ENCODE measurements at regions of chr7 and their contacts with region 1.

Region 1: DNA sequence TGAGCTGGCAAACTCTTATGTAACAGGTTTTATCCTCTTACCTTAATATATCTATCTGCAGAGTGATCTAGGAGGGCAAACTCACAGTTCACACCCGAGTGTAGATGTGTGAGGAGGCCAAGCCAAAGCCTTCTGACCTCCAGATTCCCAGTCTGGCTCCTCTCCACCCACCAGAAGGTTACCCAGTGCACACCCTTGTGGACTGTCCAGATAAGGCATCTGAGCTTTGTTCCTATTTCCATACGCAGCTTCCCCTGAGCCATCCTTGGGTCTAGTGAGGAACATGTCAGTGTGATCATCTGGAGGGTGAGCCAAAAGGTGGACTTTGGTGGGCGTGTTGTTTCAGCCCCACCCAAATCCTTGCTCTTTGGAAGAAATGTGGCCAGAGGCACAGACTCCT is 203.0 kb upstream of the MEOX2 start:
- DNase-seq: peak; percentile 63 to 71
- H3K4me3 ChIP-seq: no peak overlapping the region
- H3K4me3 Mint-ChIP-seq: no peak overlapping the region
- H3K27ac Mint-ChIP-seq: no peak overlapping the region
- H3K4me1 ChIP-seq: peaks cover 7% of the 10 kb centered on the region; the same call in 1 of the 2 replicates
- H3K4me1 Mint-ChIP-seq: no peaks in the 10 kb centered on the region
- H3K27me3 ChIP-seq: no peaks in the 10 kb centered on the region
- H3K27me3 Mint-ChIP-seq: no peaks in the 10 kb centered on the region
- CTCF ChIP-seq: peak; percentile 46 to 63

Region 2: DNA sequence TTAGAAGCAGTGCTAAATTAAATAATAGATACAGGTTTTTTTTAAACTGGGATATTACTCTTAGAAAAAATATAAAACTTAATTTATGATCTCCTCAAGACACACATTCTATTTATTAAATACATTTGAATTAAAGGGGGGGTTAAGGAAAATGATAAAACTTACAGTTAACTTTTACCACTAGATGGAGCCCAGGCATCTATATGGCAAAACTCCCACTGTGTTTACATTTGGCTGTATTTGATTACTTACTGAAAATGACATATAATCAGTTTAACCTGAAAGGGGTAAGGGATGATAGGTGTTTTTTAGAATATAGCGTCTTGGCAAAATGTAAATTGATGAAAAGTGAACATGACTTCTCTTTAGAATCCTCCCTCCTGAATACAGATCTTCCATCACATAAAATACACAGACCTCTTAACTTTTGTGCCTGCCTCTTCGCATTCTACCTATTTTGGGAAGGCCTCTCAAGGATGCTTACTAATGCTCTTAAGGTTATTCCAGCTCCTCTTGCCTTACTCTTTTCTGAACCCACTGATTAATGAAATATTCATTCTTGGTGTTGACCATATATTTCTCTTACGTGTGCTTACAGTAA is 563.4 kb before region 1 on chr7:
- CTCF ChIA-PET with region 1: no interaction called
- POLR2A ChIA-PET with region 1: no interaction called
- intact Hi-C with region 1: loop called (anchors 2 kb)
- DNase-seq: peak in 1 of 2 experiments; percentile 19
- H3K4me3 ChIP-seq: no peak overlapping the region
- H3K4me3 Mint-ChIP-seq: no peak overlapping the region
- H3K27ac Mint-ChIP-seq: no peak overlapping the region
- H3K4me1 ChIP-seq: no peaks in the 10 kb centered on the region
- H3K4me1 Mint-ChIP-seq: peaks cover 5% of the 10 kb centered on the region
- H3K27me3 ChIP-seq: no peaks in the 10 kb centered on the region
- H3K27me3 Mint-ChIP-seq: peaks cover 4% of the 10 kb centered on the region
- CTCF ChIP-seq: peak; percentile 53 to 59

Region 3: GRCh38 chr7:15783987-15784693 is 105.4 kb before region 1 on chr7:
- CTCF ChIA-PET with region 1: interaction called, 10 read pairs
- POLR2A ChIA-PET with region 1: no interaction called
- intact Hi-C with region 1: loop called (anchors 1 kb)
- DNase-seq: no peak
- H3K4me3 ChIP-seq: no peak overlapping the region
- H3K4me3 Mint-ChIP-seq: no peak overlapping the region
- H3K27ac Mint-ChIP-seq: no peak overlapping the region
- H3K4me1 ChIP-seq: no peaks in the 10 kb centered on the region
- H3K4me1 Mint-ChIP-seq: peaks cover 6% of the 10 kb centered on the region
- H3K27me3 ChIP-seq: no peaks in the 10 kb centered on the region
- H3K27me3 Mint-ChIP-seq: no peaks in the 10 kb centered on the region
- CTCF ChIP-seq: peak in 1 of 2 experiments; percentile 27

Region 4: GRCh38 chr7:15854841-15855524 is 34.5 kb before region 1 on chr7:
- CTCF ChIA-PET with region 1: interaction called, 4 read pairs
- POLR2A ChIA-PET with region 1: no interaction called
- intact Hi-C with region 1: loop called (anchors 1 kb)
- DNase-seq: no peak
- H3K4me3 ChIP-seq: no peak overlapping the region
- H3K4me3 Mint-ChIP-seq: peak overlapping the region; percentile 45
- H3K27ac Mint-ChIP-seq: peak overlapping the region; percentile 74
- H3K4me1 ChIP-seq: peaks cover 30% of the 10 kb centered on the region
- H3K4me1 Mint-ChIP-seq: peaks cover 43% of the 10 kb centered on the region
- H3K27me3 ChIP-seq: no peaks in the 10 kb centered on the region
- H3K27me3 Mint-ChIP-seq: no peaks in the 10 kb centered on the region
- CTCF ChIP-seq: no peak

Region 5: GRCh38 chr7:15905251-15906040 is 15.9 kb after region 1 on chr7:
- CTCF ChIA-PET with region 1: no interaction called
- POLR2A ChIA-PET with region 1: no interaction called
- intact Hi-C with region 1: no loop called
- DNase-seq: no peak
- H3K4me3 ChIP-seq: no peak overlapping the region
- H3K4me3 Mint-ChIP-seq: no peak overlapping the region
- H3K27ac Mint-ChIP-seq: no peak overlapping the region
- H3K4me1 ChIP-seq: no peaks in the 10 kb centered on the region
- H3K4me1 Mint-ChIP-seq: peaks cover under 1% of the 10 kb centered on the region
- H3K27me3 ChIP-seq: no peaks in the 10 kb centered on the region
- H3K27me3 Mint-ChIP-seq: no peaks in the 10 kb centered on the region
- CTCF ChIP-seq: no peak